Activated CD4-positive, alpha-beta T cell treated with anti-CD3 and anti-CD28 coated beads for 36 hours (primary cell): ENCODE measurements at regions of chr4 and their contacts with region 1.

Region 1: GRCh38 chr4:38004062-38004461 is 43.9 kb downstream of the PTTG2 start:
- DNase-seq: no peak
- ATAC-seq: no peak
- H3K4me3 Mint-ChIP-seq: no peak overlapping the region
- H3K27ac Mint-ChIP-seq: no peak overlapping the region
- H3K4me1 Mint-ChIP-seq: peaks cover 29% of the 10 kb centered on the region
- H3K27me3 Mint-ChIP-seq: no peaks in the 10 kb centered on the region

Region 2: GRCh38 chr4:37836838-37837440 is 167.1 kb before region 1 on chr4:
- CTCF ChIA-PET with region 1: no interaction called
- POLR2A ChIA-PET with region 1: interaction called, 14 read pairs
- intact Hi-C with region 1: no loop called
- DNase-seq: no peak
- ATAC-seq: peak; percentile 36
- H3K4me3 Mint-ChIP-seq: no peak overlapping the region
- H3K27ac Mint-ChIP-seq: peak overlapping the region; percentile 17
- H3K4me1 Mint-ChIP-seq: peaks cover 33% of the 10 kb centered on the region
- H3K27me3 Mint-ChIP-seq: no peaks in the 10 kb centered on the region